B cell (primary cell): ENCODE measurements at regions of chr1 and their contacts with region 1.

Region 1: DNA sequence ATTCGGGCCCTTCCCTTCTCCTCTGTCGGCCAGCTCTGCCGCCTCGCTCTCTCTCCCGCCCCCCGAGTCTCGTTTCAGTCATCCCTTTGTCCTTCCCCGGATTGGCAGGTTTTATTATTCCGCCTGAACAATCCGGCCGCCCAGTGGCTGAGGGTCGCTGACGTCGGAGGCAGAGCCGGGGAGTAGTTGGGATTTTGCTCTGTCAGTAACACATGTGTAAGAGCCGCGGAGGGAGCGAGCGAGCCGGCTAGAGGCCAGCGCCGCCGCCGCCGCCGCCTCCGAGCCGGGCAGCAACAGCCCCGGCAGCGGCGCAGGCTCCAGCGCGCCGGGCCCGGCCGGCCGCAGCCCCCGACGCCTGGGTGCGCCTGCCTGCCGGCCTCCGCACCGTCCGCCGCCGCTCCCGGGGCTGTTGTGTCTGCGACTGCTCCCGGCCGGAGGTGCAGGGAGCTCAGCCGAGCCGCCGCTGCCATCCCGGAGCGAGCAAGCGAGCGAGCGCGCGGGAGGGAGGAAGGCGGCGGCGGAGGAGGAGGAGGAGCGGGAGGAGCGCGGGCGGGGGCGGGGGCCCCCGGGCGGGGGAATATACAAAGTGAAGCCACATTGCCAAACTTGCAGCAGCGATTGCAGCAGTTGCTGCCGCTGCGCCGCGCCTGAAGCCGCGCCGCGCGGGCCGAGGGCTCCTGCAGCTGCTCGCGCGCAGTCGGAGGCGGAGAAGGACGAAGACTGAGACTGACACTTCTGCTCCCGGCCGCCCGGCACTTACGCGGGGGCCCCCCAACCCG is at the start of gene LMO4:
- DNase-seq: peak; percentile 95
- ATAC-seq: peak; percentile 75
- H3K4me3 ChIP-seq: peak within 1 kb of the TSS; percentile 71 to 93 (median 76)
- H3K4me3 Mint-ChIP-seq: peak within 1 kb of the TSS; percentile 92
- H3K27ac ChIP-seq: peak within 1 kb of the TSS; percentile 80 to 89
- H3K27ac Mint-ChIP-seq: peak within 1 kb of the TSS; percentile 99
- H3K4me1 ChIP-seq: peaks cover 33 to 34% of the 10 kb centered on the region in 2 donors
- H3K4me1 Mint-ChIP-seq: peaks cover 54% of the 10 kb centered on the region
- H3K27me3 ChIP-seq: no peaks in the 10 kb centered on the region
- H3K27me3 Mint-ChIP-seq: no peaks in the 10 kb centered on the region
- CTCF ChIP-seq: no peak
- total RNA-seq, gene LMO4: 35.7 and 40.1 TPM in 2 replicates

Region 2: DNA sequence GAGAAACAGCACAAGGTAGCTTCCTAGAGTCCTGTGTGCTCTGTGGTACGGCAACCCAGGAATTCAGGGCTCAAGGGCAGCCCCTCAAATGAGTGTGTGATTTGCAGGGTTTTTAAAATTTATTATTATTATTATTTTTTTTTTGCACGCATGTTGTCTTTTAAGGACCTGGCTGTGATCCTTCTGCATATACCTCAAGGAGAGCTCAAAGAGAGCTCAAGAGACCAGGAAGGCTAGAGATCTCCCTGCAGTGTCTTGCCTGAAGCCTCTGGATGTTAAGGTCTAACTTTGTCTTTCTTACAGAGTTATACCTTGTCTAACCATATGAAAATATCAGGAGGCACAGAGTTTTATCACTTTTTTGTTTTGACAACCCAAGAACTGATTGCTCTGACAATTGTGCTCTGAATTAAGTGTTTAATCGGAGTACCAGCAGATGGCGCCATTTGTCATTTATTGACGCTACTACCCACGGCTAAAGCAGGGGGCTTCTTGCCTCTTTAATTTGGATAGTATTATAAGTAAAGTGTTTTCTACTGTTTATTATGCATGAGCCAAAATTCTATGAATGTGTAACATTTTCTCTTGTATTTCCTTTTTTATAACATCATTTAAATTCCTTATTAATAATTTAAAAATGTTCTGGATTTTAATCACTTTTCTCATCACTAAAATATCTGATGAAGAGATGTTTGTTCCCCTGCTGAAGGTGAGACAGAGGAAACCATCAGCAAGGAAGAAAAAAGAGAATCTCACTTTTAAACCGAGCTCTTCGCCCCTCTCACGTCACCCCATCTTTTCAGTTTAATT is 35.6 kb before region 1 on chr1:
- CTCF ChIA-PET with region 1: interaction called, 9 read pairs
- POLR2A ChIA-PET with region 1: no interaction called
- intact Hi-C with region 1: loop called (anchors 1 kb)
- DNase-seq: peak; percentile 78
- ATAC-seq: peak; percentile 47
- H3K4me3 ChIP-seq: no peak overlapping the region
- H3K4me3 Mint-ChIP-seq: no peak overlapping the region
- H3K27ac ChIP-seq: no peak overlapping the region
- H3K27ac Mint-ChIP-seq: no peak overlapping the region
- H3K4me1 ChIP-seq: no peaks in the 10 kb centered on the region
- H3K4me1 Mint-ChIP-seq: no peaks in the 10 kb centered on the region
- H3K27me3 ChIP-seq: no peaks in the 10 kb centered on the region
- H3K27me3 Mint-ChIP-seq: peaks cover 13% of the 10 kb centered on the region
- CTCF ChIP-seq: peak; percentile 96

Region 3: DNA sequence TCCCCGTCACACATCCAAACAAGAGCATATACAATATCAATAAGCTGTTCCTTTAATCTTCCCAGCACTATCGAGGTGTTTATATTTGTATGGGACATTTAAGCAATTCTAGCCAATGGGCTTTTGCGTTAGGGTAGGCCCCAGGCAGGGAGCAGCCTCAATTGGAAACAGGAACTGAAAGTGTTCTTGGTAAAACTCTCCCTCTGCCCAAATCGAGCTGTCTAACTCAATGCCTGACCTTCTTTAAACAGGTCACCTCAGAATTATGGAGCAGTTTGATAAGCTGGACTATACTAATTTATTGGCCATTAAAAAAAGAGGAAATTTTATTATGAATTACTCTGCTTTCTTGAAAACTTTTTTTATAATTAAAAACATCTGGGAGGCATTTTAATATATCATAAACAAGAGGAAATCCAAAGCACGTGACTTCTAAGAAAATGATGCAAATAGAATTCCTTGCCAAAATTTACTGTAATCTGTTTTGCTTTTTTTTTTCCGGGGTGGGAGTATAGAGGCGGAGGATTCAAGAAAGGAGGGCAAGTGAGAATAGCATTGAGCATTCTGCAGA is 498.3 kb after region 1 on chr1:
- CTCF ChIA-PET with region 1: interaction called, 4 read pairs
- POLR2A ChIA-PET with region 1: no interaction called
- intact Hi-C with region 1: loop called (anchors 1 kb)
- DNase-seq: peak; percentile 82
- ATAC-seq: peak; percentile 96
- H3K4me3 ChIP-seq: peak overlapping the region in 2 of 5 experiments; percentile 8 to 43
- H3K4me3 Mint-ChIP-seq: peak overlapping the region; percentile 58
- H3K27ac ChIP-seq: no peak overlapping the region
- H3K27ac Mint-ChIP-seq: peak overlapping the region; percentile 64
- H3K4me1 ChIP-seq: peaks cover 17 to 27% of the 10 kb centered on the region in 2 donors
- H3K4me1 Mint-ChIP-seq: peaks cover 37% of the 10 kb centered on the region
- H3K27me3 ChIP-seq: no peaks in the 10 kb centered on the region
- H3K27me3 Mint-ChIP-seq: no peaks in the 10 kb centered on the region
- CTCF ChIP-seq: no peak

Region 4: DNA sequence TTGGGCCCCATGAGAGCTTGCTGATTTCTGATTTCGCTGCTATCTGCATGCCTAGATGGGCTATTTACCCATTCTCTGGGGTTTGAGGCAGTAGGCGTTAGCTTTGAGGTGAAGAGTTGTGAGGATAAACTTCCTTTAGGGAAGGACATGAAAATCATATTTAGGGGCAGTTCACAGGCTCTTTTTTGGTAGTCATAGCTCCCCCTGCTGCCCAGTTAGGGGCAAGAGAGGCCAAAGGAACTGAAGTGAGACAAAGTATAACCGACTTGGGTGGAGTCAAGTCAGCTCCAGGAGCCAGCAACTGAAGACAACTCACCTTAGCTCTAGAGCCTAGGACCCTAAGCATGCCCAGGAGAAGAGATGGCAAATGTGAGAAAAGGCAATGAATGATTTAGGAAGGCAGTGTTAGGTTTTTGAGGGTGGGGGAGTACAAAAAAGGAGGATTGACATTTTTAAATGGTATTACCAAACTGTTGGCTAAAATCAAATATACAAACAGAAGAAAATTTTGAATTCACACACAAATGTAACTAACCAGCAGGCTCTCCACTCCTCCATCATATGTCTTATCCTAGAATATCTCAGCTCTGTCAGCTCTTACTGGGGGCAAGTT is 625.4 kb after region 1 on chr1:
- CTCF ChIA-PET with region 1: interaction called, 150 read pairs
- POLR2A ChIA-PET with region 1: no interaction called
- intact Hi-C with region 1: loop called (anchors 1 kb)
- DNase-seq: peak; percentile 80
- ATAC-seq: peak; percentile 82
- H3K4me3 ChIP-seq: no peak overlapping the region
- H3K4me3 Mint-ChIP-seq: no peak overlapping the region
- H3K27ac ChIP-seq: no peak overlapping the region
- H3K27ac Mint-ChIP-seq: no peak overlapping the region
- H3K4me1 ChIP-seq: peaks cover 16 to 17% of the 10 kb centered on the region in 2 donors
- H3K4me1 Mint-ChIP-seq: peaks cover 20% of the 10 kb centered on the region
- H3K27me3 ChIP-seq: no peaks in the 10 kb centered on the region
- H3K27me3 Mint-ChIP-seq: no peaks in the 10 kb centered on the region
- CTCF ChIP-seq: peak; percentile 89